SK-N-SH (cell line): ENCODE measurements at regions of chr5 and their contacts with region 1.

Region 1: GRCh38 chr5:73693481-73694061 is 67.6 kb downstream of the ARHGEF28 start:
- DNase-seq: peak; percentile 16
- H3K4me3 ChIP-seq: no peak overlapping the region
- H3K27ac ChIP-seq: peak overlapping the region in 1 of 2 experiments; percentile 76; a peak in 2 of 4 replicates
- H3K4me1 ChIP-seq: peaks cover 0 to 27% of the 10 kb centered on the region in 2 experiments; a peak in 2 of 4 replicates
- H3K27me3 ChIP-seq: no peaks in the 10 kb centered on the region
- CTCF ChIP-seq: peak; percentile 71
- EP300 ChIP-seq: no peak
- RAD21 ChIP-seq: peak; percentile 41; the same call in 1 of the 2 replicates

Region 2: DNA sequence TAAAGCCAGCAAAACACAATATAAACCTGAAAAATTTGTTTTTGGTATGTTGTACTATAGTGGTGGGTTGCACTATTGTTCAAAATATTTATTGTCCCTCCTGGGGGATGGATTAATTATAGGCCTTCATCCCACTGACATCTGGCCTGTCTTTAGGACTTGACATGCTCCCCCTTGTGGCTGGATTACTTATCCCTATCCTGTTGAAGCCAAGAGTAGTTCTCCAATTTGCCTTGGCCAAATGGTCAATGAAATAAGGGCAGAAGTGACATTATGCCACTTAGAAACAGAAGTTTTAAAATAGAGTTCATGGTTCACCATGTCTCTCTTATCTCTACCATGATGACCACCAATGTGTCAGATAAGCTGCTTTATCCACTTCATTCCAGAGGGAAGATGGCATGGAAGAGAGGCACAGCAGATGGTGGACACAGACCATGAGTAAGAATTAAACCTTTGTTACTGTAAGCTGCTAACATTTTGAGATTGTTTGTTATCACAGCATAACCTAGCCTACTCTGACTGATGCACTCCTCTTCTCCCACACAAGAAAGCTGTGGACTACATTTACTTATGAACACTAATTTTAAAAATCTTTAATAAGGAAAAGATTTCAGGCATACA is 96.8 kb before region 1 on chr5:
- CTCF ChIA-PET with region 1: interaction called, 37 read pairs
- POLR2A ChIA-PET with region 1: no interaction called
- DNase-seq: peak; percentile 16
- H3K4me3 ChIP-seq: no peak overlapping the region; a peak in 1 of 4 replicates
- H3K27ac ChIP-seq: no peak overlapping the region
- H3K4me1 ChIP-seq: no peaks in the 10 kb centered on the region; a peak in 2 of 4 replicates
- H3K27me3 ChIP-seq: no peaks in the 10 kb centered on the region
- CTCF ChIP-seq: peak; percentile 66
- EP300 ChIP-seq: no peak
- RAD21 ChIP-seq: 0 out of 2 replicates have a peak, but pooled peaks have one; percentile 2

Region 3: DNA sequence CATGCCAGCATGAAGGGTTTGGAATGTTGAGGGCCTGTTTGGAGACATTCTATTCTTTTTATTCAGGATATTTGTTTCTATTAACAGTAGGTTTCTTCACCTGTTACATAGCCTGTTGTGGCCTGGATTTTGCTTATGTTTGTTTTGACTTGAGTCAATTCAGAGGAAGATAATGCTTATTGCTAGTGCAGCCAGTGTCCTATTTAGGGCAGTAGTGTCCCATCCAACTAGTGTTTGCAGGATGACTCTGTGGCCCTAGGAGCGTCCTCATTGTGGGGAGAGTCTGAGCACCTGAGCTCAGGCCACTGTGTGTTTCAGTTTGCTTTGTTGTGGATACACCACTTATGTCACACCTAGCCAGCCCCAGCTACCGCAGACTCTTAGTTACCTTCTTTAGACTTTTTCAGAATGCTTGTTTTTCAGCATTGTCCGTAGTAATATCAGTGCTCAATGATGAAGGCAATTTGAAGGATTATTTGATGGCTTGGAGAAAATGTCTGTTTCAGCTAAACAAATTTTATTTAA is 22.8 kb after region 1 on chr5:
- CTCF ChIA-PET with region 1: interaction called, 13 read pairs
- POLR2A ChIA-PET with region 1: no interaction called
- DNase-seq: no peak
- H3K4me3 ChIP-seq: no peak overlapping the region
- H3K27ac ChIP-seq: no peak overlapping the region
- H3K4me1 ChIP-seq: no peaks in the 10 kb centered on the region
- H3K27me3 ChIP-seq: no peaks in the 10 kb centered on the region
- CTCF ChIP-seq: no peak
- EP300 ChIP-seq: no peak
- RAD21 ChIP-seq: no peak